ENCODE measurements at regions of chr20 and their contacts with region 1.

Region 1: DNA sequence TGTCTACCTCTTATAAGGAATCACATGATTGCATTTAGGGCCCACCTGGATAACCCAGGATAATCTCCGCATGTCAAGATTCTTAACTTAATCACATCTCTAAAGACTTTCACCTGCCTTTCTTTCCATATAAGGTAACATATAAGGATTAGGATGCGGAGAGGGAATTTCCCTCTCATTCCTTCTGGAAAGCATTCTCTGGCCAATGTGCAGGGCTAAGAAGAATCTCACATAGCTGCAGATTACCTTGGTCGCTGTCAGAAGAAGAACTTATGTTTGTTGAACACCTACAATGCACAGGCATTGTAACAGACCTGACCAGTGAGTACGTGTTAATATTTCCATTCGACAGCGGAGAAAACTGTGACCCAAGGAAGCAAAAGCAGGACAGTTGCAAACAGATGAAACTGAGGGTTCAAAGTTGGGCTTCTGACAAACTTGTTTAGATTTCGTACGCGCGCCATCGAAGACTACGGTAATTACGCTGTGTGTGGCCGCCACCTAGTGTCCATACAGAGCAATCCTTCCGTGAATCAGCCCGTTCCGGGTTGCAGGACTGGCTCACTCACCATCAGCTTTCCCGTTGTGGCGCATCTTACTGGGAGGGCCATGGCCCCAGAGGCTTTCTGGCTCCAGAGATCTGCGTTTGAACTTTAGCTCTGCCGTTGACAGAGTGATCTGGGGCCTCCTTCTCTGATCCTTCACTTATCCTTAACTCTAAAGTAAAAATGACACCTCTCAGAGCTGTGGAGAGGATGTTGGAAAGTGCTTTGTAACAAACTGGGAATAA is 9.5 kb downstream of the C20orf202 start:
- DNase-seq: peak; percentile 84
- ATAC-seq: peak; percentile 95
- H3K4me3 Mint-ChIP-seq: no peak overlapping the region
- H3K27ac Mint-ChIP-seq: no peak overlapping the region
- H3K4me1 Mint-ChIP-seq: peaks cover 34% of the 10 kb centered on the region
- H3K27me3 Mint-ChIP-seq: peaks cover 27% of the 10 kb centered on the region

Region 2: GRCh38 chr20:973785-974194 is 239.0 kb before region 1 on chr20:
- CTCF ChIA-PET with region 1: interaction called, 12 read pairs
- POLR2A ChIA-PET with region 1: no interaction called
- DNase-seq: peak; percentile 56
- ATAC-seq: peak; percentile 65
- H3K4me3 Mint-ChIP-seq: no peak overlapping the region
- H3K27ac Mint-ChIP-seq: no peak overlapping the region
- H3K4me1 Mint-ChIP-seq: peaks cover 2% of the 10 kb centered on the region
- H3K27me3 Mint-ChIP-seq: peaks cover 5% of the 10 kb centered on the region

Region 3: GRCh38 chr20:1108437-1108920 is 104.3 kb before region 1 on chr20:
- CTCF ChIA-PET with region 1: interaction called, 29 read pairs
- POLR2A ChIA-PET with region 1: no interaction called
- DNase-seq: peak; percentile 64
- ATAC-seq: peak; percentile 77
- H3K4me3 Mint-ChIP-seq: no peak overlapping the region
- H3K27ac Mint-ChIP-seq: no peak overlapping the region
- H3K4me1 Mint-ChIP-seq: no peaks in the 10 kb centered on the region
- H3K27me3 Mint-ChIP-seq: no peaks in the 10 kb centered on the region

Region 4: DNA sequence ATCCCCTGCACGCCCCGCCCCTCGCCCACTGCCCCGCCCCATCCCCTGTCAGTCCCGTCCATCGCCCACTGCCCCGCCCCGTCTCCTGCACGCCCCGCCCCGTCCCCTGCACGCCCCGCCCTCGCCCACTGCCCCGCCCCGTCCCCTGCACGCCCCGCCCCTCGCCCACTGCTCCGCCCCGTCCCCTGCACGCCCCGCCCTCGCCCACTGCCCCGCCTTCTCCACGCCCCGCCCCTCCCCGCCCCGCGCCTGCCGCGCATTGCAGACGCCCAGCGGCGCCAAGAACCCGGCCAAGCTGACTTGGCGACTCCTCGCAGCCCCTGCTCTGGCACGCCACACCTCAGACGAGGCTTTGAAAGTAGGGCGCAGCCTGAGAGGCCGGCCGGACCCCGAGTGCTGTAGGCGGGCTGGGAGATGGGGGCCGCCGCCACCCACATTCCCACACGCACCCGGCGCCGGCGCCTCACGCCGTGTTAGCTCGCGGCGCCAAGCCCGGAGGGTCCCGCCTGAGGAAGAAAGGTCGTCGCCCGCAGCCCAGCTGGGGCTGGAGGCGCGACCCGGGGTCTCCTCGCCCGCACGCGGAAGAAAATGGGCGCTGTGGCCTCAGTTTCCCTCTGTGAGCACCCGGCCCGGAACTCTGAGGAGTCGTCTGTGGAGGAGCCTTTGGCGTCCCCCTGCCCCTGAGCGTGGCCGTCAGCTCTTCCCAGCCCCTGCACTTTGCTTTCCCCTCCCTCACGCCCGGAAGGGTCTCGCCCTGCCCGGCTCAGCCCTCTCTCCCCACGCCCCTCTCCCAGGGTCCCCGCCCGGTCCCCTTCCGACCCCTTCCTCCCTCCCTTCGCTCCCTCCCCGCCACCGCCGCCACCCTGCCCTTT is 13.2 kb after region 1 on chr20 and contains the start of gene RAD21L1:
- CTCF ChIA-PET with region 1: interaction called, 20 read pairs
- POLR2A ChIA-PET with region 1: no interaction called
- DNase-seq: peak; percentile 85
- ATAC-seq: peak; percentile 82
- H3K4me3 Mint-ChIP-seq: peak within 1 kb of the TSS; percentile 84
- H3K27ac Mint-ChIP-seq: peak within 1 kb of the TSS; percentile 72
- H3K4me1 Mint-ChIP-seq: peaks cover 11% of the 10 kb centered on the region
- H3K27me3 Mint-ChIP-seq: peaks cover 35% of the 10 kb centered on the region
- total RNA-seq, gene RAD21L1: 0.18 TPM in 1 of 2 experiments, not detected in the other

Measured in activated CD8-positive, alpha-beta T cell treated with anti-CD3 and anti-CD28 coated beads, Interleukin-2, amount 10 ng/mL, durations not matched to agents 7 days and 5 days (primary cell).